Activated T-helper 2 cell treated with anti-CD3 and anti-CD28 coated beads, Interferon-gamma antibody, Interleukin-2, Interleukin-4, amounts not matched to agents 10 μg/mL and 5 μg/mL and 100 μg/mL, durations not matched to agents 14 hours and 24 hours and 36 hours (primary cell): ENCODE measurements at regions of chr5 and their contacts with region 1.

Region 1: GRCh38 chr5:119340597-119341218 is 15.1 kb upstream of the TNFAIP8 start:
- DNase-seq: peak; percentile 65
- H3K4me3 Mint-ChIP-seq: peak overlapping the region; percentile 78
- H3K27ac Mint-ChIP-seq: peak overlapping the region; percentile 98
- H3K4me1 Mint-ChIP-seq: peaks cover 89% of the 10 kb centered on the region
- H3K27me3 Mint-ChIP-seq: no peaks in the 10 kb centered on the region

Region 2: DNA sequence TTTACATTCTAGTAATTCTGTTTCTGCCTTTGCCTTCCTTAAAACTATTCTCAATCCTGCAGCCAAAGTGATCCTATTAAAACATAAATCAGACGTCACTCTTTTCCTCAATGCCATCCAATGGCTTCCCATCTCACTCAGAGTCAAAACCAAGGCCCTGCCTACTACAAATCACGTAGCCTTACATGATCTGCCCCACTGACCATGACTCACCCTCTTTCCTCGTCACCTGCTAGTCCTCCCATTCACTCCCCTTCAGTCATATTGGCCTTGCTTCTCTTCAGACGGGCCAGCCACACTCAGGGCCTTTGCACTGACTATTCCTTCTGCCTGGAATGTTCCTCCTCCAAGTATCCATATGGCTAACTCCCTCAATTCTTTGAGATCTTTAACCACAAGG is 308.8 kb before region 1 on chr5:
- intact Hi-C with region 1: loop called (anchors 5 kb)
- DNase-seq: no peak
- H3K4me3 Mint-ChIP-seq: peak overlapping the region; percentile 3
- H3K27ac Mint-ChIP-seq: peak overlapping the region; percentile 58
- H3K4me1 Mint-ChIP-seq: peaks cover 25% of the 10 kb centered on the region
- H3K27me3 Mint-ChIP-seq: no peaks in the 10 kb centered on the region

Region 3: DNA sequence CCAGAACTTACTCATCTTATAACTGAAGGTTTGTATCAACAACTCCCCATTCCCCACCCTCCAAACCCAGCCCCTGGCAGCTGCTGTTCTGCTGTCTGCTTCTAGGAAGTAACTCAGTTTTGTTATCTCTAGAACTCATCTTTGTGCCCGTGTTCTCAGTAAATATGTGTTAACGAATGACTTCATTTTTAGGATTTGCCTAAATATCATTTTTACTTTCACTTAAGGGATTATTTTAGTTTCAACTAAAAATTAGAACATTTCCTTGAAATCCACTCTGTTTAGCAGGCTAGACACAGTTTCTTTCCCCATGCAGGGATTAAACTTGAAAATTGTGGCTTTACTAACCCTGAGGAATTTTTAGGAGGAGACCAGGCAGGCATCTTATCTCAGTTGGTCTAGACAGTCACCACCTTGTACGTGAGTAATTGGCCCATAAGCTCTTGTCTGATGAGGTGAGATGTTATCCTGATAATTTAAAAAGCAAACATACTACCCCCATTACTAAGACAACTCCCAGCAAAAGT is 53.1 kb before region 1 on chr5:
- intact Hi-C with region 1: loop called (anchors 5 kb)
- DNase-seq: peak; percentile 47
- H3K4me3 Mint-ChIP-seq: peak overlapping the region; percentile 77
- H3K27ac Mint-ChIP-seq: peak overlapping the region; percentile 97
- H3K4me1 Mint-ChIP-seq: peaks cover 91% of the 10 kb centered on the region
- H3K27me3 Mint-ChIP-seq: no peaks in the 10 kb centered on the region

Region 4: GRCh38 chr5:119315516-119315949 is 25.2 kb before region 1 on chr5:
- intact Hi-C with region 1: loop called (anchors 1 kb)
- DNase-seq: no peak
- H3K4me3 Mint-ChIP-seq: no peak overlapping the region
- H3K27ac Mint-ChIP-seq: peak overlapping the region; percentile 77
- H3K4me1 Mint-ChIP-seq: peaks cover 84% of the 10 kb centered on the region
- H3K27me3 Mint-ChIP-seq: no peaks in the 10 kb centered on the region

Region 5: GRCh38 chr5:119367502-119368237 is 27.0 kb after region 1 on chr5:
- intact Hi-C with region 1: loop called (anchors 1 kb)
- DNase-seq: no peak
- H3K4me3 Mint-ChIP-seq: peak overlapping the region; percentile 73
- H3K27ac Mint-ChIP-seq: peak overlapping the region; percentile 92
- H3K4me1 Mint-ChIP-seq: peaks cover 74% of the 10 kb centered on the region
- H3K27me3 Mint-ChIP-seq: no peaks in the 10 kb centered on the region

Region 6: GRCh38 chr5:119452373-119453039 is 111.8 kb after region 1 on chr5 and contains the start of gene HSD17B4:
- intact Hi-C with region 1: no loop called
- DNase-seq: peak; percentile 71
- H3K4me3 Mint-ChIP-seq: peak within 1 kb of the TSS; percentile 94
- H3K27ac Mint-ChIP-seq: peak within 1 kb of the TSS; percentile 88
- H3K4me1 Mint-ChIP-seq: peaks cover 17% of the 10 kb centered on the region
- H3K27me3 Mint-ChIP-seq: peaks cover 10% of the 10 kb centered on the region
- total RNA-seq, gene HSD17B4: 81.1 and 88.1 TPM in 2 replicates